Activated naive CD4-positive, alpha-beta T cell treated with anti-CD3 and anti-CD28 coated beads for 36 hours (primary cell): ENCODE measurements at regions of chr5 and their contacts with region 1.

Region 1: GRCh38 chr5:96601811-96602244 is 60.3 kb upstream of the CAST start:
- DNase-seq: peak; percentile 68
- H3K4me3 Mint-ChIP-seq: no peak overlapping the region
- H3K27ac Mint-ChIP-seq: no peak overlapping the region
- H3K4me1 Mint-ChIP-seq: peaks cover 10% of the 10 kb centered on the region
- H3K27me3 Mint-ChIP-seq: peaks cover 5% of the 10 kb centered on the region

Region 2: GRCh38 chr5:96344678-96345577 is 256.9 kb before region 1 on chr5:
- CTCF ChIA-PET with region 1: interaction called, 94 read pairs
- intact Hi-C with region 1: loop called (anchors 1 kb)
- DNase-seq: peak; percentile 27
- H3K4me3 Mint-ChIP-seq: no peak overlapping the region
- H3K27ac Mint-ChIP-seq: no peak overlapping the region
- H3K4me1 Mint-ChIP-seq: peaks cover 25% of the 10 kb centered on the region
- H3K27me3 Mint-ChIP-seq: peaks cover 4% of the 10 kb centered on the region

Region 3: GRCh38 chr5:96381526-96381925 is 220.3 kb before region 1 on chr5:
- CTCF ChIA-PET with region 1: interaction called, 4 read pairs
- intact Hi-C with region 1: loop called (anchors 1 kb)
- DNase-seq: peak; percentile 19
- H3K4me3 Mint-ChIP-seq: no peak overlapping the region
- H3K27ac Mint-ChIP-seq: no peak overlapping the region
- H3K4me1 Mint-ChIP-seq: no peaks in the 10 kb centered on the region
- H3K27me3 Mint-ChIP-seq: peaks cover 11% of the 10 kb centered on the region

Region 4: GRCh38 chr5:96434201-96434645 is 167.6 kb before region 1 on chr5:
- CTCF ChIA-PET with region 1: interaction called, 9 read pairs
- intact Hi-C with region 1: loop called (anchors 5 kb)
- DNase-seq: peak; percentile 78
- H3K4me3 Mint-ChIP-seq: no peak overlapping the region
- H3K27ac Mint-ChIP-seq: no peak overlapping the region
- H3K4me1 Mint-ChIP-seq: peaks cover 14% of the 10 kb centered on the region
- H3K27me3 Mint-ChIP-seq: peaks cover 70% of the 10 kb centered on the region

Region 5: GRCh38 chr5:96584712-96585111 is 17.1 kb before region 1 on chr5:
- CTCF ChIA-PET with region 1: interaction called, 16 read pairs
- intact Hi-C with region 1: no loop called
- DNase-seq: peak; percentile 6
- H3K4me3 Mint-ChIP-seq: no peak overlapping the region
- H3K27ac Mint-ChIP-seq: no peak overlapping the region
- H3K4me1 Mint-ChIP-seq: peaks cover 5% of the 10 kb centered on the region
- H3K27me3 Mint-ChIP-seq: peaks cover 6% of the 10 kb centered on the region